Esophagus muscularis mucosa (tissue), 4 donors: ENCODE measurements at regions of chr12 and their contacts with region 1.

Region 1: GRCh38 chr12:131896080-131896810 is 1.8 kb downstream of the ULK1 start:
- DNase-seq: peak; percentile 96
- H3K4me3 ChIP-seq: peak overlapping the region; percentile 67 to 82 (median 69)
- H3K27ac ChIP-seq: peak overlapping the region; percentile 95 to 99 (median 98)
- H3K4me1 ChIP-seq: peaks cover 39 to 67% (median 60%) of the 10 kb centered on the region in 4 donors
- H3K27me3 ChIP-seq: no peaks in the 10 kb centered on the region
- CTCF ChIP-seq: no peak
- EP300 ChIP-seq: peak; percentile 57
- POLR2A ChIP-seq: peak; percentile 92

Region 2: GRCh38 chr12:131928711-131929580 is 32.7 kb after region 1 on chr12 and contains the start of gene PUS1:
- intact Hi-C with region 1: loop called (anchors 2 kb)
- DNase-seq: peak; percentile 98
- H3K4me3 ChIP-seq: peak within 1 kb of the TSS; percentile 75 to 95 (median 82)
- H3K27ac ChIP-seq: peak within 1 kb of the TSS; percentile 90 to 96 (median 92)
- H3K4me1 ChIP-seq: peaks cover 16 to 43% (median 39%) of the 10 kb centered on the region in 4 donors
- H3K27me3 ChIP-seq: no peaks in the 10 kb centered on the region
- CTCF ChIP-seq: no peak
- EP300 ChIP-seq: no peak
- POLR2A ChIP-seq: peak; percentile 42
- total RNA-seq, gene PUS1: 14.7 to 23.3 (median 19.5) TPM

Region 3: DNA sequence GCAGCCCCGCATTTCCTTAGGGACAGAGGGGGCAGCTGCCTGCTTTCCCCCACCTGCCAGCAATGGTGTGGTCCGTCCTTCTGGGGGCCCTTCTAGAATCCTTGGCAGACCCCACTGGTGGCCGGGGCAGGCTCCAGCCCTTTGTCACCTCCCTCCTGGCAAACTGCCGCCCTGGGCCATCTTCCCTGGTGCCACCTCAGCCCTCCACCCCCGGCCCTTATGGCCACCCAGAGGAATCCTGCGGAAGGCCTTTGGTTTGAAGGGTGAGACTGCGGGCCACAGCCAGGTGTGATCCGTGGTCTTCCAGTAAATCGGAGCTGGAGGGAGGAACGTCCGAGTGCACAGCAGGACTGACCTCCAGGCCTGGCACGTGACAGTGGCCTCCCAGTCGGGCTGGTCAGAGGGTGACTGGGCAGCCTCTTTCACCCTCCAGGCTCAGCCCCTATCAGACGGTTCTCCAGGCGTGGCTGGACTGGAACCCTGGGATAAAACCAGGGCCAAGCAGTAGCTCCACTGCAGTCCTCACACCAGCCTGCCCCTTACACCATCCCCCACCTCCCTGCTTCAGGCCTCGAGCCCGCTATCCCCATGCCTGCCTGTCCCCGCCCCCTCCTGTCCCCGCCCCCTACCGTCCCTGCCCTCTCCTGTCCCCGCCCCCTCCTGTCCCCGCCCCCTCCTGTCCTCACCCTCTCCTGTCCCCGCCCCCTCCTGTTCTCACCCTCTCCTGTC is 606.1 kb after region 1 on chr12:
- intact Hi-C with region 1: no loop called
- DNase-seq: no peak
- H3K4me3 ChIP-seq: no peak overlapping the region
- H3K27ac ChIP-seq: no peak overlapping the region
- H3K4me1 ChIP-seq: peaks cover 94 to 100% (median 100%) of the 10 kb centered on the region in 4 donors
- H3K27me3 ChIP-seq: no peaks in the 10 kb centered on the region
- CTCF ChIP-seq: no peak
- EP300 ChIP-seq: no peak
- POLR2A ChIP-seq: no peak